Left ventricle myocardium inferior (tissue), 1 donor: ENCODE measurements at regions of chr6 and their contacts with region 1.

Region 1: DNA sequence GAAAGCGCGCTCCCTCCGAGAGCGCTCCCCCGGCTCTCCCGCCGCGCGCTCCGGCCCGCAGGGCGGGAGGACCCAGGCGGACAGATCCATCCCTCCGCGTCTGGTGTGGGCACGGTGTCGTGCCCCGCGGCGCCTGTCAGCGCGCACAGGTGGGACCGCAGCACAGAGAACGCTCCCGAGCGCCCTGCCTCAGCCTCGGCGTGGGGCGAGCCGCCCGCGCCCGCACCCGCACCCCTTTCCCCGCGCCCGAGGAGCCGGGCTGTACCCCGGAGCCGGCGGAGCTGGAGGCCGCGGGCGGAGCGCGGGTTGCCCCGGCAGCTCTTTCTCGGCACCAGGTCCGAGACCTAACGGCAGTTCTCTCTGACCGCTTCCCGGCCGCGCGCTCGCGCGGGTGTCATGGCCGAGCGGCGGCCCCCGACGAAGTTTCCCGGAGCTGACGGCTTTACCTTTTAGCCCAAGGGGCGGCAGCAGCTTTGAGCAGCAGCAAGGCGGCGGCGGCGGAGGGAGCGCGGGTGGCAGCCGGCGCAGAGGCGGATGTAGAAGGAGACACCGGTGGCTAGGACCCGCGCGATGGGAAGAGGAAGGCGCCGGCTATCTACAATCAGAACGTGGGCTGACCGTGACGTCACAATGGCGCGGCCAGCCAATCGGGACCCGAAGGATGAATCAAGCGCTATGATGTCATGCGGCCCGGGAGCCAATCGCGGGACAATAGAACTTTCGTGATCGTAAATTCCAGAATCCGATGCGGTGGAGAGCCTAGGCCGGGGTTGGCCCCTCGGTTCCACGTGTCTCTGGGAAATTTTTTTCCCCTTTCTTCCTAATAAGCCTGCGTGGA is at the start of gene ELOVL5:
- DNase-seq: peak; percentile 98
- H3K4me3 ChIP-seq: peak within 1 kb of the TSS; percentile 99
- H3K27ac ChIP-seq: peak within 1 kb of the TSS; percentile 98
- H3K4me1 ChIP-seq: peaks cover 39% of the 10 kb centered on the region
- H3K27me3 ChIP-seq: no peaks in the 10 kb centered on the region
- CTCF ChIP-seq: peak; percentile 42
- total RNA-seq, gene ELOVL5: 19.0 TPM

Region 2: GRCh38 chr6:53103992-53104675 is 244.5 kb before region 1 on chr6:
- intact Hi-C with region 1: no loop called
- DNase-seq: no peak
- H3K4me3 ChIP-seq: no peak overlapping the region
- H3K27ac ChIP-seq: no peak overlapping the region
- H3K4me1 ChIP-seq: no peaks in the 10 kb centered on the region
- H3K27me3 ChIP-seq: no peaks in the 10 kb centered on the region
- CTCF ChIP-seq: no peak

Region 3: GRCh38 chr6:53300656-53301551 is 47.7 kb before region 1 on chr6:
- intact Hi-C with region 1: loop called (anchors 5 kb)
- DNase-seq: peak; percentile 24
- H3K4me3 ChIP-seq: peak overlapping the region; percentile 15
- H3K27ac ChIP-seq: peak overlapping the region; percentile 83
- H3K4me1 ChIP-seq: peaks cover 80% of the 10 kb centered on the region
- H3K27me3 ChIP-seq: no peaks in the 10 kb centered on the region
- CTCF ChIP-seq: no peak